ENCODE measurements at regions of chr6 and their contacts with region 1.

Region 1: GRCh38 chr6:158972241-158973233 is 27.5 kb downstream of the RSPH3 start:
- DNase-seq: no peak
- ATAC-seq: peak; percentile 60
- H3K4me3 Mint-ChIP-seq: no peak overlapping the region
- H3K27ac Mint-ChIP-seq: no peak overlapping the region
- H3K4me1 Mint-ChIP-seq: peaks cover 6% of the 10 kb centered on the region
- H3K27me3 Mint-ChIP-seq: no peaks in the 10 kb centered on the region
- CTCF ChIP-seq: peak; percentile 57

Region 2: GRCh38 chr6:158644231-158645063 is 328.1 kb before region 1 on chr6 and contains the start of gene DYNLT1:
- CTCF ChIA-PET with region 1: interaction called, 3 read pairs
- POLR2A ChIA-PET with region 1: no interaction called
- intact Hi-C with region 1: loop called (anchors 5 kb)
- DNase-seq: peak; percentile 97
- ATAC-seq: peak; percentile 68
- H3K4me3 Mint-ChIP-seq: peak within 1 kb of the TSS; percentile 95
- H3K27ac Mint-ChIP-seq: peak within 1 kb of the TSS; percentile 85
- H3K4me1 Mint-ChIP-seq: peaks cover 52% of the 10 kb centered on the region
- H3K27me3 Mint-ChIP-seq: no peaks in the 10 kb centered on the region
- CTCF ChIP-seq: no peak
- total RNA-seq, gene DYNLT1: 37.7 and 43.9 TPM in 2 replicates

Region 3: DNA sequence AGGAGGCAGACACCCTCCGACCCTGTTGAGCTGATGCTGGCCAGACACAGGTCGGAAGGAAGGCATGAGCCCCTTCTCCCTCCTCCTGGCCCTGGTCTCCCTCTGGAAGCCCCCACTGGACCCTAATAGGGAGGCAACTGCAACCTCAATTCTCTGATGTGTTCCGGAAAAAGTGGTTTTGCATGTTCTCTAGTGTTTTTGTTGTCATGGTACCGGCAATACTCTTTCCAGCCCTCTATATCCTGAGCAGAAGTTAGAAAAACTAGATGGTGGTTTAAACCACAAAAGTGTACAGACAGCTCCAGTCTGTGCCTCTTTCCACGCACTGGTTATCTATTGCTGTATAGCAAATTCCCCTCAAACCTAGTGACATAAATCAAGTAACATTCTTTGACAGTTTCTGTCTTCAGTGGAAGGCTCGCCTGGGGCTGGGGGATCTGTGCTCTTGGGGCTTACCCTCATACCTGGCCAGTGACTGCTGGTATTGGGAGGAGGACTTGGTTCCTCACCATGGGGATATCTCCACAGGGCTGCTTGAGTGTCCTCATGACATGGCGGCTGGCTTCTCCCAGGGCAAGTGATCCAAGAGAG is 285.7 kb before region 1 on chr6:
- CTCF ChIA-PET with region 1: interaction called, 13 read pairs
- POLR2A ChIA-PET with region 1: interaction called, 5 read pairs
- intact Hi-C with region 1: loop called (anchors 1 kb)
- DNase-seq: no peak
- ATAC-seq: peak; percentile 84
- H3K4me3 Mint-ChIP-seq: no peak overlapping the region
- H3K27ac Mint-ChIP-seq: no peak overlapping the region
- H3K4me1 Mint-ChIP-seq: peaks cover 21% of the 10 kb centered on the region
- H3K27me3 Mint-ChIP-seq: no peaks in the 10 kb centered on the region
- CTCF ChIP-seq: no peak

Region 4: GRCh38 chr6:158793432-158793831 is 179.1 kb before region 1 on chr6:
- CTCF ChIA-PET with region 1: interaction called, 60 read pairs
- POLR2A ChIA-PET with region 1: interaction called, 3 read pairs
- intact Hi-C with region 1: loop called (anchors 1 kb)
- DNase-seq: no peak
- ATAC-seq: peak; percentile 54
- H3K4me3 Mint-ChIP-seq: peak overlapping the region; percentile 44
- H3K27ac Mint-ChIP-seq: peak overlapping the region; percentile 70
- H3K4me1 Mint-ChIP-seq: peaks cover 95% of the 10 kb centered on the region
- H3K27me3 Mint-ChIP-seq: no peaks in the 10 kb centered on the region
- CTCF ChIP-seq: no peak

Region 5: DNA sequence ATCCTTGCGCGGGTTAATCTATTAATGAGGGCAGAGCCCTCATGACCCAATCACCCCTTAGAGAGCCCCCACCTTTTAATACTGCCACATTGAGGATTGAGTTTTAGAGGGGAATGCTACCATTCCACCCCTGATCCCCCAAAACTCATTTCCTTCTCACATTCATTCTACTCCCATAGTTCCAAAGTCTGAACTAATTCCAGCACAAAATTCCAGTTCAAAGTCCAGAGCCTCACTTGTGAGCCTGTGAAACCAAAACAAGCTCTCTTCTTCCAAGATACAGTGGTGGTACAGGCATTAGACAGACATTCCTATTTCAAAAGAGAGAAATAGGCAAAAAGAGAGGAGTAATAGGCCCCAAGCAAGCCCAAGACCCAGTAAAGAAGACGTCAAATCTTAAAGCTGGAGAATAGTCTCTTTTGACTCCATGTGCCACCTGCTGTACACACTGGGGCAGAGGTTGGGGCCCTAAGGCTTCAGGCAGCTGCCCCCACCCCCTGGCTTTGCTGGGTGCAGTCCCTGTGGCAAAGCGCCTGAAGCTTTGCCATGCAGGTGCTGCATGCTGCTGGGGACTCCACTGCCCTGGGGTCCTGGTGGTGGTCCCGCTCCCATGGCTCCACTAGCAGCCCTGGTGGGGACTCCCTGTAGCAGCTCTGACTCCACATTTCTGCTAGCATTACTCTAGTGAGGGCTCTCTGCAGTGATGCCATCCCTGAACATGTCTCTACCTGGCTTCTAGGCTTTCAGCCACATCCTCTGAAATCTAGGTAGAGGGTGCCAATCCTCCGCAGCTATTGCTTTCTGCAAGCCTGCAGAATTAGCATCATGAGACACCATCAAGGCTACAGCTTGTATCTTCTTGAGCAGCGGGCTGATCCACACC is 13.8 kb before region 1 on chr6:
- CTCF ChIA-PET with region 1: interaction called, 4 read pairs
- POLR2A ChIA-PET with region 1: interaction called, 3 read pairs
- intact Hi-C with region 1: loop called (anchors 1 kb)
- DNase-seq: peak; percentile 20
- ATAC-seq: peak; percentile 87
- H3K4me3 Mint-ChIP-seq: no peak overlapping the region
- H3K27ac Mint-ChIP-seq: no peak overlapping the region
- H3K4me1 Mint-ChIP-seq: peaks cover 34% of the 10 kb centered on the region
- H3K27me3 Mint-ChIP-seq: no peaks in the 10 kb centered on the region
- CTCF ChIP-seq: no peak